ENCODE measurements at regions of chr5 and their contacts with region 1.

Region 1: DNA sequence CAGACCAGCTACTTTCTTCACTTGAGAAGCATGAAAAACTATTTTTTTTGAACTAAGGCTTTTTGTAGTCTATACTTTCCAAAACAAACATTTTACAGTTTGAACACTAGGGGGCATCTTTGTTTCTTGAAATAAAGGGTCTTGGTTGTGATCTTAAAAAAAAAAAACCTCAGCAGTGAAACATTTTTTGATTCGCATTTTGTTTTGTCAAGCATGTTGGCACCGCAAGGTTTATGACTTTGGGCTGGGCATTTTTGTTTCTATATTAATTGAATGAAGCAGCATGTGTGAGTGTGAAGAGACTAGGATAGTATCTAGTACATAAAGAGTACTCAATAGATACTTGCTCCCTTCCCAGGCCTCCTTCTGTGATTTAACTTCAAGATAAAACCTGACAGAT is 31.6 kb upstream of the ACOT12 start:
- DNase-seq: no peak
- H3K4me3 ChIP-seq: no peak overlapping the region
- H3K27ac ChIP-seq: peak overlapping the region; percentile 22 to 51
- H3K4me1 ChIP-seq: peaks cover 0 to 6% of the 10 kb centered on the region in 2 donors
- H3K27me3 ChIP-seq: no peaks in the 10 kb centered on the region
- CTCF ChIP-seq: peak; percentile 41 to 62 (median 54)

Region 2: GRCh38 chr5:81301271-81302015 is 124.1 kb before region 1 on chr5 and contains the start of gene ZCCHC9:
- intact Hi-C with region 1: no loop called
- DNase-seq: peak; percentile 74 to 96
- H3K4me3 ChIP-seq: peak within 1 kb of the TSS; percentile 77 to 96
- H3K27ac ChIP-seq: peak within 1 kb of the TSS; percentile 88 to 93
- H3K4me1 ChIP-seq: peaks cover 5 to 16% of the 10 kb centered on the region in 2 donors
- H3K27me3 ChIP-seq: no peaks in the 10 kb centered on the region
- CTCF ChIP-seq: peak in 2 of 3 experiments; percentile 17 to 19
- total RNA-seq, gene ZCCHC9: 10.5 TPM

Region 3: GRCh38 chr5:81393783-81394718 is 31.5 kb before region 1 on chr5 and contains the start of gene ACOT12:
- intact Hi-C with region 1: no loop called
- DNase-seq: no peak
- H3K4me3 ChIP-seq: peak within 1 kb of the TSS; percentile 45 to 75
- H3K27ac ChIP-seq: no peak within 1 kb of the TSS
- H3K4me1 ChIP-seq: peaks cover 3 to 4% of the 10 kb centered on the region in 2 donors
- H3K27me3 ChIP-seq: no peaks in the 10 kb centered on the region
- CTCF ChIP-seq: no peak
- total RNA-seq, gene ACOT12: not detected

Region 4: DNA sequence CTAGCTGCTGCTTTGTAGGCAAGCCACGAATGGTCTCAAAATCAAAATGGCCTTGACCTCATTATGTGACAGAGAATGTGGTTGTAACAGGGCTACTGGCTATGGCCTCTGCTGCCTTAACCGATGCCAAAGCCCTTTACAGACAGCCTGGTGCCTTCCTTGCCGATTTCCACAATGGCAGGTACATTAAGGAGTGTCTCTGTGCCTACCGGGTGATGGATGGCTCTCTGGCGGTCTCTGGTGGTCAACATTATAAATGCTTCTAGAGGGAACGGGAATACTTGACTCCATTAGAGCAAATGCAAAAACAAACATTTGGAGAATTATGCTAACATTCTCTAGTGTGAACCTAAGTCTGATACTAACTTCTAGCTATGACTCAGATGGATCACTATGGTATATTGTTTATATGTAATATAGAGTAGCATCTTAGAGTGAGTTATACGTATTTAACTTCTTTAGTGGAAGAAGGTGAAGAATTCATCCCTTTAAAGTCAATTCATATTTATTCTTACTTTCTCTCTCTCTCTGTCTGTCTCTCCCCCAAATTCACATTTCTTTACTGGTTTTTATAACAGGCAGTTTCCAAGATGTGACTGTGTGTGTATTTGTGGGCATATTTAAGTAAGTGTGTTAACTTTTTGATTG is 800.1 kb after region 1 on chr5:
- intact Hi-C with region 1: loop called (anchors 5 kb)
- DNase-seq: peak in 1 of 2 donors; percentile 69
- H3K4me3 ChIP-seq: no peak overlapping the region
- H3K27ac ChIP-seq: no peak overlapping the region
- H3K4me1 ChIP-seq: no peaks in the 10 kb centered on the region
- H3K27me3 ChIP-seq: no peaks in the 10 kb centered on the region
- CTCF ChIP-seq: peak; percentile 55 to 82 (median 73)

Measured in ascending aorta (tissue), 2 donors.